ENCODE measurements at regions of chr13 and their contacts with region 1.

Region 1: DNA sequence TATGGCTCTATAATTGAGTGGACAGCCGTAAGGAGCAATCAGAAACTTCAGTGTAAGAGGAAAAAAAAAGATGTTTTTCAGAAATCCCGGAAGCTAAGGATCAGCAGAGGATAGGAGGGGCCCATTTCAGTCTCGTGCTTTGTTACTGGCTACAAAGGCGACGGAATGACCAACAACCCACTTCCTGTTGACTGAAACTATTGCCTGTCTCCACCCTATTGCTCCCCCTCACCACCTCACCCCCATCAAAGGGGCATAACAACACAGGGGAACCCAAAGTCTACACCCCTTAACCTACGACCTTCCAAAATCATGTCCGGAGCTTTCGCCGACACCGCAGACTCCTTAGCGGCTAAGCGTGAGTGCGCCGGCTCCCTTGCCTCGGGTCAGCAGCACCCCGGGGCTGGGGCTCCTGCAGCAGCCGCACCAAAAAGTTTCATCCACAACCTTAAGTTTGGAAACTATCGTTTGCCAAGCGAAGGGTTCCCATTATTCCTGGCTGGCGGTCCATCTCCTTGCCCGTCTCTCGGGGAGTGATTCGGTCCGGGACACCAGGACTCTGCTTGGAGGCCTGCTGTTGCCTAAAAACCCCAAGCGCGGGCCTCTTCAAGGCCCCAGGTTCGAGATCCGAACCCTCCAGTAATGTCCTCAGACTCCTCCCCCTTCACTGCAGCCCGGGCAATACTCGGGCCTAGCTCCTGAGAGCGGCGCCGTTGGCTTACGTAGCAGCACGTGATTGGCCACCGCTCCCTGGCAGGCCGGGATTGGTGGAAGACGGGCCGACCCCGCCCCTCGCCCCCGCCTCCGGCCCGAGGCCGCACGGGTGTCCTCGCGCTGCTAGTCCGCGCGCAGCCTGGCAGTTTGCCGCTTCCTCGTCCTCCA is at the start of gene TPP2:
- DNase-seq: peak; percentile 99
- H3K4me3 ChIP-seq: peak within 1 kb of the TSS; percentile 81
- H3K4me3 Mint-ChIP-seq: peak within 1 kb of the TSS; percentile 86
- H3K27ac Mint-ChIP-seq: peak within 1 kb of the TSS; percentile 91
- H3K4me1 ChIP-seq: peaks cover 3% of the 10 kb centered on the region; the same call in 1 of the 2 replicates
- H3K4me1 Mint-ChIP-seq: peaks cover 23% of the 10 kb centered on the region
- H3K27me3 ChIP-seq: no peaks in the 10 kb centered on the region
- H3K27me3 Mint-ChIP-seq: no peaks in the 10 kb centered on the region
- CTCF ChIP-seq: no peak
- total RNA-seq, gene TPP2: 58.9 and 64.3 TPM in 2 replicates

Region 2: GRCh38 chr13:102580552-102581169 is 15.7 kb before region 1 on chr13:
- CTCF ChIA-PET with region 1: interaction called, 3 read pairs
- POLR2A ChIA-PET with region 1: no interaction called
- intact Hi-C with region 1: loop called (anchors 1 kb)
- DNase-seq: peak in 1 of 2 experiments; percentile 54
- H3K4me3 ChIP-seq: no peak overlapping the region
- H3K4me3 Mint-ChIP-seq: no peak overlapping the region
- H3K27ac Mint-ChIP-seq: no peak overlapping the region
- H3K4me1 ChIP-seq: no peaks in the 10 kb centered on the region
- H3K4me1 Mint-ChIP-seq: no peaks in the 10 kb centered on the region
- H3K27me3 ChIP-seq: no peaks in the 10 kb centered on the region
- H3K27me3 Mint-ChIP-seq: peaks cover 6% of the 10 kb centered on the region
- CTCF ChIP-seq: peak; percentile 66 to 75

Region 3: GRCh38 chr13:102628559-102628958 is 32.2 kb after region 1 on chr13:
- CTCF ChIA-PET with region 1: no interaction called
- POLR2A ChIA-PET with region 1: no interaction called
- intact Hi-C with region 1: no loop called
- DNase-seq: no peak
- H3K4me3 ChIP-seq: no peak overlapping the region
- H3K4me3 Mint-ChIP-seq: no peak overlapping the region
- H3K27ac Mint-ChIP-seq: no peak overlapping the region
- H3K4me1 ChIP-seq: no peaks in the 10 kb centered on the region
- H3K4me1 Mint-ChIP-seq: no peaks in the 10 kb centered on the region
- H3K27me3 ChIP-seq: no peaks in the 10 kb centered on the region
- H3K27me3 Mint-ChIP-seq: no peaks in the 10 kb centered on the region
- CTCF ChIP-seq: no peak

Region 4: GRCh38 chr13:102651892-102652291 is 55.5 kb after region 1 on chr13:
- CTCF ChIA-PET with region 1: no interaction called
- POLR2A ChIA-PET with region 1: interaction called, 3 read pairs
- intact Hi-C with region 1: loop called (anchors 1 kb)
- DNase-seq: no peak
- H3K4me3 ChIP-seq: no peak overlapping the region
- H3K4me3 Mint-ChIP-seq: no peak overlapping the region
- H3K27ac Mint-ChIP-seq: peak overlapping the region; percentile 57
- H3K4me1 ChIP-seq: peaks cover 32% of the 10 kb centered on the region
- H3K4me1 Mint-ChIP-seq: peaks cover 7% of the 10 kb centered on the region
- H3K27me3 ChIP-seq: no peaks in the 10 kb centered on the region
- H3K27me3 Mint-ChIP-seq: no peaks in the 10 kb centered on the region
- CTCF ChIP-seq: no peak

Region 5: DNA sequence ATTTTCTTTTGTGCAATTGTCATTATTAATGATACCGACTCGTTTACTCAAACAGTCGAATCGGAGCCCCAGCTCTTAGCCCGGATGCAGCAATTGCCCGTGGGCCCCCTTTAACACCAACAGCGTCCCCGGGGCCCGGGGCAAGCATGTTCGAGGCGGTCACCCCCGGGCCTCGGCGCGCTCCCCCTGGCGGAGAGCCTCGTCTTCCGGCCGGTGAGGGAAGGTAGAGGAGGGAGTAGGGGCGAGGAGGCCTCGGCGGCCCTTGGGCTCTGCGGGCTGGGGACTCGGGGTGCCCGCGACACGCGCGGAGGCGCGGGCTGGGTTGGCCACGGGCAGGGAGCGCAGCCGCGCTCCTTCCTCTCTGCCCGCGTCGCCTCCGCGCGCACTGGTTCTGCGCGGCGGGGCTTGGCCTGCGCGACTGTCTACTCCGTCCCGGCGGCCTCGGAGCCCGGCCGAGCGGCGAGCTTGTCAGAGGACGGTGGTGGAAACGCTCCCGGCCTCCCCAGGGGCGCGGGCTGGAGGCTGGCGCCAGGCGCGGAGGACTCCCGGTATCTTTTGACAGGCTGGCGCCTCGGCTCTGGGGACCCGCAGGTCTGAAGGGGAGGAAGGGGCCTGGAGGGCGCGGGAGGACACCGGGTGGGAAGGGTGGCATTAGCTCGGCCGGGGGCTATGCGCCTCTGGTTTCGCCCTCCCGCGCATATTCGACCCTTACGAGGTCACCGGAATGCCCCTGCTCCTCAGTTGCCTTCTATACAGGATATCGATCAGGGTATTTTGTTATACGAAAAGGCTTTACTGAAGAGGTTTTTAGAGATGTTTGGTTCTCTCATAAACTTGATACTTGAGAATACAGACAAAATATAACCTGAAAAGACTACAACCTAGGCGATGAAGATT is 204.0 kb after region 1 on chr13:
- CTCF ChIA-PET with region 1: interaction called, 8 read pairs
- POLR2A ChIA-PET with region 1: interaction called, 6 read pairs
- intact Hi-C with region 1: loop called (anchors 1 kb)
- DNase-seq: peak; percentile 85 to 93
- H3K4me3 ChIP-seq: peak overlapping the region; percentile 84
- H3K4me3 Mint-ChIP-seq: peak overlapping the region; percentile 93
- H3K27ac Mint-ChIP-seq: peak overlapping the region; percentile 81
- H3K4me1 ChIP-seq: 0 out of 2 replicates have a peak, but pooled peaks cover 4% of the 10 kb centered on the region
- H3K4me1 Mint-ChIP-seq: no peaks in the 10 kb centered on the region
- H3K27me3 ChIP-seq: no peaks in the 10 kb centered on the region
- H3K27me3 Mint-ChIP-seq: no peaks in the 10 kb centered on the region
- CTCF ChIP-seq: peak; percentile 91

Region 6: DNA sequence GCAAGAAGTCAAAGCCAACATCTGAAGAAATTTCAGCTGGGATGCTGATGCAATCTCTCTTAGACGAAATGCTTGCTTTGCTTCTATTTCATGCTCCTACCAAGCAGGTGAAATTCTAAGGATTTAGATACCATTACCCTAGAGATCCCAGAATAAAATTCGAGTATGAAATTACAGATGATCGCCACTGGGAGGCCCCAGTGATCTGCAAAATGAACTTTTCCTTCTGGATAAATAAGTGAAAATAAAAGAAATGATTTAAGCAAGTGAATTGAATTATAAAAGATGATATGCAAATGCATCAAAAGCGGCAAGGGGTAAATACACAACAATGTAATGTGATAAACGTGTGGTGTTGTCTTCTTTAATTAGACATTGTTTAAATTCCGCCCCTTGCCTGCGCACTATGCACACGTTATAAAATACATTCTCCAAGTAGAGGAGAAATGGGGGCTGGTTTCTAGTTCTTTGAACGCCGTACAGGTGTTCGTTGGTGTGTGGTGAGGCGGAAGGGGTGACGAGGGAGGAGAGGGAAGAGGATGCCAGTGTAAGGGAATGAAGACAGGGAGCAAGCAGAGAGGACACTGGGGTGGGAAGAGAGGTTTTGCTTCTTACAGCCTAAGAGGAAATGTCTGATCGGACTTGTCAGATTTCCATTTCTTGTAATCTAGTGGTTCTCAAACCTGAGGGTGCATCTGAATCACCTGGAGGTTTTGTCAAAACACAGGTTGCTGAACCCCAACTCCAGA is 307.4 kb after region 1 on chr13:
- CTCF ChIA-PET with region 1: no interaction called
- POLR2A ChIA-PET with region 1: no interaction called
- intact Hi-C with region 1: loop called (anchors 5 kb)
- DNase-seq: no peak
- H3K4me3 ChIP-seq: no peak overlapping the region
- H3K4me3 Mint-ChIP-seq: no peak overlapping the region
- H3K27ac Mint-ChIP-seq: no peak overlapping the region
- H3K4me1 ChIP-seq: peaks cover 43% of the 10 kb centered on the region
- H3K4me1 Mint-ChIP-seq: peaks cover 32% of the 10 kb centered on the region
- H3K27me3 ChIP-seq: no peaks in the 10 kb centered on the region
- H3K27me3 Mint-ChIP-seq: no peaks in the 10 kb centered on the region
- CTCF ChIP-seq: peak; percentile 24 to 56